PC-3 (cell line): ENCODE measurements at regions of chr2 and their contacts with region 1.

Region 1: DNA sequence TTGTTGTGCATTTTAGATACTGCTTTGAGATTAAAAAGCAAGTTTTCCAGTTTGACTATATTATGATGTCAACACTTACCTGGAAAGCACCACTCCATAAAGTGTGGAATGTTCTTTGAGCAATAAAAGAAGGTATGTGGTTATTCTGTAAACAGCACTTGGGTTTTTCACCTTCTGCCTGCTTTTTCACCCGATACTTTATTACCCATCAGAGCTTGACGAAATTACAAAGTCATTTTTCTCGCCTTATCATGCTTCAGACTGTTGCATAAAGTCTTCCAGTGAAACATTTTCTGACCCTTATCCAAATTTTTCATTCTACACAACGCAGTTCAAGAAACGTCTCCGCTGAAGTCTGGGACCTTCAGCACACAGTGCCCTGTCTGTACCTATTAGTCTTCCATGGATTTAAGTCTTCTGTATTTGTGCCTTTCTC is 25.2 kb downstream of the CAB39 start:
- DNase-seq: peak; percentile 85
- ATAC-seq: peak; percentile 48
- H3K4me3 ChIP-seq: peak overlapping the region; percentile 53
- H3K27ac ChIP-seq: peak overlapping the region; percentile 95
- H3K4me1 ChIP-seq: peaks cover 60% of the 10 kb centered on the region
- H3K27me3 ChIP-seq: no peaks in the 10 kb centered on the region
- CTCF ChIP-seq: no peak

Region 2: DNA sequence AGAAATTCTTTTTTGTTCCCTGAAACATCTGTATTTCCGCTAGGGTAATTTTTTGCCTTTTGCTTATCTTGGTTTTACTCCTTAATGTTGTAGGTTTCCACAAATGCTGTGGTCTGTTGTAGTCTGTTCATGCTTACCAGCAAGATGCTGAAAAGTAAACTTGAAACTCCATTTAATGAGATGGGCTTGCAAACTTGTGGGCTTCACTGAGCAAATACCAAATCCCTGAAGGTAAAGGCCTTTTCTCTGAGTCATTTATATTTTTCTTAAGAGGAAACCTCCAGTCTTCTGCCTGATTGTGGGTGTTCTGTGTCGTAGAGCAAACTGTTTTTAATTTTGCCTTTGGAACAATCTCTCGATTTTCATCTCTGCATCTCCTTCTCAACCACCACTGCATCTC is 503.0 kb before region 1 on chr2:
- CTCF ChIA-PET with region 1: no interaction called
- POLR2A ChIA-PET with region 1: no interaction called
- intact Hi-C with region 1: no loop called
- DNase-seq: peak; percentile 48
- ATAC-seq: peak; percentile 77
- H3K4me3 ChIP-seq: no peak overlapping the region
- H3K27ac ChIP-seq: no peak overlapping the region
- H3K4me1 ChIP-seq: peaks cover 13% of the 10 kb centered on the region
- H3K27me3 ChIP-seq: no peaks in the 10 kb centered on the region
- CTCF ChIP-seq: no peak

Region 3: DNA sequence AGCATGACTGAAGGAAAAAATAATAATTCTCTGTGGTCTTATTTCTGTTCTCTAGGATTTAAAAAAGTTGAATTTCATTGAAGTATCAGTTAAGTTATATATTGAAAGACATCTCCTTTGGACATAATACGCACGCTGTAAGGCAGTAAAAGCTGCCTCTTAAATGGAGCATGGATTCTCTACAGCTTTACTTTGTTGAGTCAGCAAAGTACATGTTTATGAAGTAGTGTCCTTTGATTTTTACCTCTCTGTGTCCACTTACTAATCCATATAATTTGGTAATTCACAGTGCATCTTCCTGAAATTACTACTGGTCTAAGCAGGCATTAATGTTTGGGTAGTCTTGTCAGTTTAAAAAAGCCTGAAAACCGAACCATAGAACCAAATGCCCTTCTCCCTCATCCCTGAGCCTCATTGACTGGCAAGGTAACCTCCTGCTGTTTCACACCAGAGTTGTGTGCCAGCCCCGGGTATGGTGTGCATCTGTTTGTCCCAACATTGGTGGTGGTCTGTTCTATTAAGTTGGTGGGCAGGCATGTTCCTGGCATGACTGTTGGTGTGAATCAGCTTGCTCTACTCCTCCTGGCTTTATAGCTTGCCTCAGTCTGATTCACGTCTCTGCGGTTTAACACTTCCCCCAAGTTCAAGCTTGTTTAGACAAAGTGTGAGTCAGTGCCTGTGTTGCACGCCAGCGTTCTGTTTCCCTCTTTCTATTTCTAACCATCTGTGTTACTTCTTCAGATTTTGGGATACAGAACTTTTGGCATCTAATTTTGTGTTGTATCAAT is 56.0 kb after region 1 on chr2:
- CTCF ChIA-PET with region 1: interaction called, 4 read pairs
- POLR2A ChIA-PET with region 1: no interaction called
- intact Hi-C with region 1: loop called (anchors 1 kb)
- DNase-seq: peak; percentile 96
- ATAC-seq: peak; percentile 90
- H3K4me3 ChIP-seq: peak overlapping the region; percentile 52
- H3K27ac ChIP-seq: peak overlapping the region; percentile 98
- H3K4me1 ChIP-seq: peaks cover 63% of the 10 kb centered on the region
- H3K27me3 ChIP-seq: no peaks in the 10 kb centered on the region
- CTCF ChIP-seq: no peak

Region 4: DNA sequence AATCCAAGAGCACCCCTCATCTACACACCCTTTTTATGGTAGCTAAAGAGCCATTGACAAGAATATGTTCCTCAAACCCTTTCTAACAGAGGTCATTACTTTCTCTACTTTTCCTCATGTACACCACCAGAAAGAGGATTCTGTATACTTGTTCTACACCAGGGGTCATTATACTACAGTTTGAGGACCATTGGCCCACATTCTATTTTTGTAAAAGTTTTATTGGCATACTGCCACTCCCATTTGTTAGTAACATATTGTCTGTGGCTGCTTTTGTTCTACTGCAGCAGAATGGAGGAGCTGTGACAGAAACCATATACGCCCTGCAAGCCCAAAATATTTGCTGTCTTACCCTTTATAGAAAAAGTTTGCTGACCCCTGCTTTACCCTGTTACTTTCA is 372.7 kb after region 1 on chr2:
- CTCF ChIA-PET with region 1: no interaction called
- POLR2A ChIA-PET with region 1: no interaction called
- intact Hi-C with region 1: no loop called
- DNase-seq: peak; percentile 17
- ATAC-seq: peak; percentile 34; the same call in 1 of the 2 replicates
- H3K4me3 ChIP-seq: no peak overlapping the region
- H3K27ac ChIP-seq: no peak overlapping the region
- H3K4me1 ChIP-seq: peaks cover 18% of the 10 kb centered on the region
- H3K27me3 ChIP-seq: no peaks in the 10 kb centered on the region
- CTCF ChIP-seq: peak; percentile 33; the same call in 1 of the 2 replicates